A549 (cell line): ENCODE measurements at regions of chr5 and their contacts with region 1.

Region 1: GRCh38 chr5:41903892-41904799 is at the start of gene RIMOC1:
- DNase-seq: peak; percentile 91 to 99
- ATAC-seq: peak; percentile 99 to 100
- H3K4me3 ChIP-seq: peak within 1 kb of the TSS; percentile 90
- H3K27ac ChIP-seq: peak within 1 kb of the TSS; percentile 81 to 90
- H3K4me1 ChIP-seq: peaks cover 14% of the 10 kb centered on the region
- CTCF ChIP-seq: no peak
- EP300 ChIP-seq: no peak; a peak in 1 of 5 replicates
- POLR2A ChIP-seq: peak; percentile 83
- RAD21 ChIP-seq: no peak
- polyA plus RNA-seq, gene RIMOC1: 25.2 and 38.4 TPM in 2 replicates

Region 2: DNA sequence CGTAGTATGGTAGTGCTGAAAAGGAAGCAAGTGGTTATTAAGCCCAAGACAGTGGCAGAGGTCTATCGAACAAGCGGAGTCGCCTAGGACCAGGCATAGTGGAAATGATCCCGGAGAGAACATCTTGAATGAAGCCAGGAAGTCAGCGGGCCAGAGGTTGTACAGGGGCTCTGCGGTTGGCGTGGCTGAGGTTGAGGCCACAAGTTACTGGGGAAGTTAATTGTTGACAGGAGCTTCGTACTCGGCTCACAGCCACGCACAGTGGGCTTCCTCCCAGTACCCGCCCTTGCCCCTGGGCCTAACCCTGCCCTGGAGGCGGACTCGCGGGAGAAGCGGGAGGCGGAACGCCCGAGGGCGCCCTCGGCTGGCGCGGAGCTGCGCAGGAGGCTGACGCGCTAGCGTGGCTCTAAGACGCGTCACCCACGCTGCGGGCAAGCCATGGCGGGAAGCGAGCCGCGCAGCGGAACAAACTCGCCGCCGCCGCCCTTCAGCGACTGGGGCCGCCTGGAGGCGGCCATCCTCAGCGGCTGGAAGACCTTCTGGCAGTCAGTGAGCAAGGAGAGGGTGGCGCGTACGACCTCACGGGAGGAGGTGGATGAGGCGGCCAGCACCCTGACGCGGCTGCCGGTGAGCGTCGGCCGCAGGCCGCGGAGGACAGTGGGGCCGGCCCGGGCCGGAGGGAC is 20.9 kb after region 1 on chr5 and contains the start of gene FBXO4:
- CTCF ChIA-PET with region 1: interaction called, 3 read pairs
- POLR2A ChIA-PET with region 1: interaction called, 27 read pairs
- DNase-seq: peak; percentile 56 to 84
- ATAC-seq: peak; percentile 99
- H3K4me3 ChIP-seq: peak within 1 kb of the TSS; percentile 89
- H3K27ac ChIP-seq: peak within 1 kb of the TSS; percentile 90 to 95
- H3K4me1 ChIP-seq: 0 out of 3 replicates have a peak, but pooled peaks cover 4% of the 10 kb centered on the region
- CTCF ChIP-seq: peak; percentile 55; the same call in 2 of the 3 replicates
- EP300 ChIP-seq: no peak
- POLR2A ChIP-seq: peak; percentile 83
- RAD21 ChIP-seq: peak; percentile 12 to 35; a peak in 4 of 5 replicates
- polyA plus RNA-seq, gene FBXO4: 14.9 and 22.5 TPM in 2 replicates

Region 3: DNA sequence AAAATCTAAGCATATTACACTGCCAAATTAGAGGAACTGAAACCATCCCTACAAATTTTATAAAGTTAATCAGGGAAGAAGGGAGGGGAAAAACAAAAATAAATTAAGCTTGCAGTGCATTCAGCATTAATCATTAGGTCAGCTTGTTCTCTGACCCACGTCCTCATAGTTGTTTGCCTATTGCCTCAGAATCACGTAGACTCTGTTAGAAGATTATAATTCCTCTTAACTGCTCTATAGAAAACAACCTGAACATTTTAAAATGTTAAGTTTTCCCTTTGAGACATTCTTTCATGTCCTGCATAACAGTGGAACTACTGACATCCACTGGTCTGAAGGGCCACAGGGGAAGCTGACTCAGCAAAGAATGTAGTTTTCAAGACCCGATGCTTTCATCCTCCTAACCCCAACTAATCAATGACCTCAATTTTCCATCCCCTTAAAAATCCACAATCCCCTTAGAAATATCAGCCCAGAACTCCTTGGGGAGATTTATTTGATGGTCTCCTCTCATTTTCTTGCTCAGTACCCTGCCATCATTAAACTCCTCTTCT is 133.3 kb after region 1 on chr5:
- CTCF ChIA-PET with region 1: no interaction called
- POLR2A ChIA-PET with region 1: no interaction called
- DNase-seq: no peak
- ATAC-seq: no peak
- H3K4me3 ChIP-seq: no peak overlapping the region
- H3K27ac ChIP-seq: no peak overlapping the region
- H3K4me1 ChIP-seq: no peaks in the 10 kb centered on the region
- CTCF ChIP-seq: no peak
- EP300 ChIP-seq: no peak
- POLR2A ChIP-seq: no peak
- RAD21 ChIP-seq: no peak